H1 (cell line): ENCODE measurements at regions of chr17 and their contacts with region 1.

Region 1: GRCh38 chr17:44102845-44103622 is 20.4 kb downstream of the HDAC5 start:
- DNase-seq: no peak
- H3K4me3 ChIP-seq: no peak overlapping the region
- H3K27ac ChIP-seq: no peak overlapping the region
- H3K4me1 ChIP-seq: peaks cover 0 to 6% (median 0%) of the 10 kb centered on the region in 4 experiments; a peak in 4 of 7 replicates
- H3K27me3 ChIP-seq: no peaks in the 10 kb centered on the region
- CTCF ChIP-seq: no peak
- EP300 ChIP-seq: no peak
- POLR2A ChIP-seq: no peak
- RAD21 ChIP-seq: no peak

Region 2: GRCh38 chr17:44086364-44087311 is 16.4 kb before region 1 on chr17:
- CTCF ChIA-PET with region 1: interaction called, 638 read pairs
- POLR2A ChIA-PET with region 1: interaction called, 9 read pairs
- DNase-seq: no peak
- H3K4me3 ChIP-seq: peak overlapping the region in 3 of 4 experiments; percentile 19 to 46 (median 24); a peak in 5 of 8 replicates
- H3K27ac ChIP-seq: peak overlapping the region; percentile 70
- H3K4me1 ChIP-seq: peaks cover 3 to 18% (median 12%) of the 10 kb centered on the region in 4 experiments
- H3K27me3 ChIP-seq: no peaks in the 10 kb centered on the region
- CTCF ChIP-seq: no peak
- EP300 ChIP-seq: no peak
- POLR2A ChIP-seq: no peak
- RAD21 ChIP-seq: no peak